Activated CD4-positive, alpha-beta T cell treated with anti-CD3 and anti-CD28 coated beads for 36 hours (primary cell): ENCODE measurements at regions of chr12 and their contacts with region 1.

Region 1: DNA sequence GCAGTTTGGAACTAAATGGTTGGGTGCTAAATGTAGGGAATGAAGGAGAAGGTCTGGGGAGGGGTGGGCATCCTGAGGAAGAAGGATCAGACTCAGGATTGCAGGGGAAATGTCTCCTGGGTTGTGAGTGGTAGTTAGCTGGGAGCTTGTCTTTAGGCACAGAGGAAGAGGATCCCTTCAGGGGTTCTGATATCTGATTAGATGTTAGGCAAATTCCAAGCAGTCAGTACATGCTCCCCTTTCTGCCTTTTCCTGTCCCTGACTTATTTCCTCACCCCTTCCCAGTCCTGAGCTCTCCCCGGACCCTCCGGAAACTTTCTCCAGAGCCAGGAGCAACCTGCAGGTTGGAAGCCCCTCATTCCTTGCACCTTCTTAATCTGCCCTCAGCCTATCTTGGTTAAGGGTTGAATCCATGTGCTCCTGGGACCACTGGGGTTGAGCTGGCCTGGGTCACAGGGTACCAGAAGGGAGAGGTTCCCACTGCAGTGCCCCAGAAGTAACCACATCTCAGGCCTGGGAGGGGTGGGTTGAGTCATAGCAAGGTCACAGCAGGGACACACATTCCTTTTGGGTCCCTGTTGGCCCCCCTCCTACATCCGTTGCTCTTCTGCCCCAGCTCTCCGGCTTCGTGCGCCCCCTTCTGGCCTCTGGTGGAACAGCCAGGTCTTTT is 1.6 kb downstream of the IGFBP6 start:
- DNase-seq: peak; percentile 95
- ATAC-seq: peak; percentile 59
- H3K4me3 Mint-ChIP-seq: peak overlapping the region; percentile 72
- H3K27ac Mint-ChIP-seq: peak overlapping the region; percentile 89
- H3K4me1 Mint-ChIP-seq: peaks cover 43% of the 10 kb centered on the region
- H3K27me3 Mint-ChIP-seq: peaks cover 12% of the 10 kb centered on the region

Region 2: DNA sequence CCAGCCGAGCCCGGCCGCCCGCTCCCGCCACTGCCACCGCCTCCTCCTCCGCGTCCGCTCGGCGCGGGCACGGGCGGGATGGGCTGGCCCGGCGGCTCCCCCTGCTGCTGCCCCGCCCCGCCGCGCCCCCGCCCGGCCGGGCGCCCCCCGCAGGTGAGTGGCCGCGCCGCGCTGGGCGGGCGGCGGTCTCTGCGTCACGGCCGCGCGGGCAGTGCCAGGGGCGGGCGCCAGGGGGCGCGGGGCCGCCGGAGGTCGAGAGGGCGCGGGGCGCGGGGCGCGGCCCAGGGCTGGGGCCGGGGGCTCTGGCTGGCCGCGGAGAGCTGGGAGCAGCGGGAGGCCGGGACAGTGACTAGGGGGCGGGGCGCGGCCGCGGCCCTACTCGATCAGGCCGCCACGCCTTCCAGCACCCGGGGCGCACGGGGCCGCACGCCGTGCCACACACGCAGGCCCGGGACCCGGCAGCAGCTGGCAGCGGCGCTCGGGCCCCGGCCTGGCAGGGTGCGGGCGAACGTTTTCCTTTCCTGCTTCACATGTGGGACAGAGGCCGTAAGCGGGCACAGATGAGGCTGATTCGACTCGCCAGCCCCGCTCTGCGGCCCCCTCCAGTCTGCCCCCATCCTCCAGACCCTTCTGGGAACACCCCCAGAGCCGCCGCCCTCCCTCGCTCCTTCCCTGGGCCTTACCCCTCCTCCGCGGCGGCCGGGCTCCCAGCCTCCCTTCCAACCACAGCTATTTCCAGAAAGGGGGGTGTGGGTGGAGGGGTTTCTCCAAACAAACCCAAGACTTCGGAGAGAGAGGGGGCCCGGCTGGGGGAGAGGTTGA is 51.7 kb before region 1 on chr12:
- CTCF ChIA-PET with region 1: interaction called, 24 read pairs
- POLR2A ChIA-PET with region 1: no interaction called
- intact Hi-C with region 1: loop called in 1 of 2 experiments (anchors 1 kb)
- DNase-seq: peak; percentile 80
- ATAC-seq: peak; percentile 73
- H3K4me3 Mint-ChIP-seq: peak overlapping the region; percentile 86
- H3K27ac Mint-ChIP-seq: peak overlapping the region; percentile 37
- H3K4me1 Mint-ChIP-seq: peaks cover 30% of the 10 kb centered on the region
- H3K27me3 Mint-ChIP-seq: no peaks in the 10 kb centered on the region

Region 3: GRCh38 chr12:53054112-53054833 is 44.8 kb before region 1 on chr12:
- CTCF ChIA-PET with region 1: interaction called, 277 read pairs
- POLR2A ChIA-PET with region 1: no interaction called
- intact Hi-C with region 1: loop called in 1 of 2 experiments (anchors 1 kb)
- DNase-seq: peak; percentile 96
- ATAC-seq: peak; percentile 94
- H3K4me3 Mint-ChIP-seq: peak overlapping the region; percentile 86
- H3K27ac Mint-ChIP-seq: peak overlapping the region; percentile 84
- H3K4me1 Mint-ChIP-seq: peaks cover 14% of the 10 kb centered on the region
- H3K27me3 Mint-ChIP-seq: no peaks in the 10 kb centered on the region

Region 4: GRCh38 chr12:53418221-53418620 is 319.1 kb after region 1 on chr12:
- CTCF ChIA-PET with region 1: no interaction called
- POLR2A ChIA-PET with region 1: no interaction called
- intact Hi-C with region 1: no loop called
- DNase-seq: no peak
- ATAC-seq: no peak
- H3K4me3 Mint-ChIP-seq: no peak overlapping the region
- H3K27ac Mint-ChIP-seq: no peak overlapping the region
- H3K4me1 Mint-ChIP-seq: peaks cover 58% of the 10 kb centered on the region
- H3K27me3 Mint-ChIP-seq: no peaks in the 10 kb centered on the region